Psoas muscle (tissue), 8 donors: ENCODE measurements at regions of chr1 and their contacts with region 1.

Region 1: GRCh38 chr1:48061162-48062136 is 64.3 kb upstream of the TRABD2B start:
- DNase-seq: peak in 1 of 2 donors; percentile 40
- ATAC-seq: peak; percentile 65 to 81 (median 78)
- H3K4me3 ChIP-seq: no peak overlapping the region
- H3K27ac ChIP-seq: no peak overlapping the region
- H3K4me1 ChIP-seq: no peaks in the 10 kb centered on the region
- H3K27me3 ChIP-seq: no peaks in the 10 kb centered on the region
- CTCF ChIP-seq: peak; percentile 69

Region 2: GRCh38 chr1:47997289-47998200 is 63.9 kb before region 1 on chr1 and contains the start of gene TRABD2B:
- intact Hi-C with region 1: loop called (anchors 1 to 2 kb)
- DNase-seq: peak; percentile 83 to 88
- ATAC-seq: peak; percentile 87 to 95 (median 90)
- H3K4me3 ChIP-seq: peak within 1 kb of the TSS; percentile 66
- H3K27ac ChIP-seq: peak within 1 kb of the TSS; percentile 30
- H3K4me1 ChIP-seq: peaks cover 2% of the 10 kb centered on the region
- H3K27me3 ChIP-seq: peaks cover 0 to 45% (median 4%) of the 10 kb centered on the region in 3 donors
- CTCF ChIP-seq: peak; percentile 90
- total RNA-seq, gene TRABD2B: 0.42 to 0.76 (median 0.51) TPM